ENCODE measurements at regions of chr4 and their contacts with region 1.

Region 1: GRCh38 chr4:20251796-20252655 is at the start of gene SLIT2:
- DNase-seq: peak; percentile 92
- H3K4me3 ChIP-seq: peak within 1 kb of the TSS; percentile 80
- H3K27ac ChIP-seq: peak within 1 kb of the TSS; percentile 68
- H3K4me1 ChIP-seq: peaks cover 35% of the 10 kb centered on the region
- H3K27me3 ChIP-seq: no peaks in the 10 kb centered on the region
- CTCF ChIP-seq: no peak
- total RNA-seq, gene SLIT2: 59.7 and 70.6 TPM in 2 replicates

Region 2: DNA sequence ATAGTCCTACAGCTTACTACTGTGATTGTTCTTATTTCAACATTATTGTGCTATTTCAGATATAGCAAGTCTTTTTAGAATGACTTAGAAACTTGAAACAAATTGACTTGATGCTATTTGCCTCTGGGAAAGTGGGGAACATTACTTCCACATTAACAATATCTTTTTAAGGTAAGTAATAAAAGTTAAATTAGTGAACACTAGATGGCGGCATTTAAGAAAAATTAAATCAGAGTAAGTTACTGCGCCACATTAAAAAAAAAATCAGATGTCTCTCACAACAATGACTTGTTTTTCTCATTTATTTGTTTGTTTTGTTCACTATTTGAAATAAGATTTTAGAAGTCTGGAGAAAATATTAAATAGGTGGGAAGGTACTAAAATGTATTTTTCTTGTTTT is 1027.2 kb before region 1 on chr4:
- CTCF ChIA-PET with region 1: interaction called, 6 read pairs
- POLR2A ChIA-PET with region 1: no interaction called
- intact Hi-C with region 1: loop called (anchors 5 kb)
- DNase-seq: peak; percentile 62
- H3K4me3 ChIP-seq: no peak overlapping the region
- H3K27ac ChIP-seq: no peak overlapping the region
- H3K4me1 ChIP-seq: no peaks in the 10 kb centered on the region
- H3K27me3 ChIP-seq: no peaks in the 10 kb centered on the region
- CTCF ChIP-seq: peak; percentile 56

Region 3: DNA sequence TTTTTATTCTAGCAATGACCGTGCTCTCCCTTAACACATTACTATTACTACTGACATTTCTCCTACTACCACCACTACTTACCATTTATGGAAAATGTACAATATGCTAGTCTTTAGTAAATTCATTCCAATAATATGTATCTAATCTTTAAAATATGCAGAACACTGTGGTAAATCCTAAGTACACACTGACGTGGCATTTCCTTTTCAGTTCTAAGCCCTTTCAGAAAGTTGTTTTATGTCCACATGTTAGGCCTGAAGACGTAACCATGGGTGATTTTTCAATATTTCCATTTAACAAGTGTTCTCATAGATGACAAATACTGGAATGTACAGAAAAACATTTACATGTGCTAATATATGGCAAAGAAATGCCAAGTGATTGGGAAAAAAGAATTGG is 269.0 kb before region 1 on chr4:
- CTCF ChIA-PET with region 1: no interaction called
- POLR2A ChIA-PET with region 1: no interaction called
- intact Hi-C with region 1: loop called (anchors 5 kb)
- DNase-seq: peak; percentile 55
- H3K4me3 ChIP-seq: no peak overlapping the region
- H3K27ac ChIP-seq: no peak overlapping the region
- H3K4me1 ChIP-seq: peaks cover 10% of the 10 kb centered on the region
- H3K27me3 ChIP-seq: no peaks in the 10 kb centered on the region
- CTCF ChIP-seq: no peak

Region 4: GRCh38 chr4:20422398-20422797 is 170.4 kb after region 1 on chr4:
- CTCF ChIA-PET with region 1: no interaction called
- POLR2A ChIA-PET with region 1: no interaction called
- intact Hi-C with region 1: loop called (anchors 5 kb)
- DNase-seq: peak; percentile 70
- H3K4me3 ChIP-seq: no peak overlapping the region
- H3K27ac ChIP-seq: no peak overlapping the region
- H3K4me1 ChIP-seq: peaks cover 31% of the 10 kb centered on the region
- H3K27me3 ChIP-seq: no peaks in the 10 kb centered on the region
- CTCF ChIP-seq: peak; percentile 68

Region 5: DNA sequence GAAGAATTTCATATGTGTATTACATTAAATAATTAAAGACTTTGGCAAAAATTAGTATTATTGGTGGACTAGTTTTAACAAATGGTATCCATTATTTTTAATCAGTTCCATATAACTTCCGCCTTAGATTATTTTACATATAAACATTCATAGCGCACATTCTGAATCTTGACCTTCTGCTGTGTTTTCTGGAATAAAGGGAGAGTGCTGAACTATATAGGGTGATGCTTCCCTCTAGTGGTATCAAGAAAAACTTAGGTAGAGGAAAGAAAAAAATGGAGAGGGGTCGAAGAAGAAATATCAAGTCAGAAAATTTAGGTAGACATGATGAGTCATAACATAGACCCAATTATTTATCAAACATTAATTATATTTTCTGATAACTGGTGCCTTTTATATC is 292.6 kb after region 1 on chr4:
- CTCF ChIA-PET with region 1: no interaction called
- POLR2A ChIA-PET with region 1: no interaction called
- intact Hi-C with region 1: loop called (anchors 5 kb)
- DNase-seq: peak; percentile 66
- H3K4me3 ChIP-seq: no peak overlapping the region
- H3K27ac ChIP-seq: no peak overlapping the region
- H3K4me1 ChIP-seq: peaks cover 5% of the 10 kb centered on the region
- H3K27me3 ChIP-seq: no peaks in the 10 kb centered on the region
- CTCF ChIP-seq: peak; percentile 69

Measured in A673 (cell line).